ENCODE measurements at regions of chr6 and their contacts with region 1.

Region 1: DNA sequence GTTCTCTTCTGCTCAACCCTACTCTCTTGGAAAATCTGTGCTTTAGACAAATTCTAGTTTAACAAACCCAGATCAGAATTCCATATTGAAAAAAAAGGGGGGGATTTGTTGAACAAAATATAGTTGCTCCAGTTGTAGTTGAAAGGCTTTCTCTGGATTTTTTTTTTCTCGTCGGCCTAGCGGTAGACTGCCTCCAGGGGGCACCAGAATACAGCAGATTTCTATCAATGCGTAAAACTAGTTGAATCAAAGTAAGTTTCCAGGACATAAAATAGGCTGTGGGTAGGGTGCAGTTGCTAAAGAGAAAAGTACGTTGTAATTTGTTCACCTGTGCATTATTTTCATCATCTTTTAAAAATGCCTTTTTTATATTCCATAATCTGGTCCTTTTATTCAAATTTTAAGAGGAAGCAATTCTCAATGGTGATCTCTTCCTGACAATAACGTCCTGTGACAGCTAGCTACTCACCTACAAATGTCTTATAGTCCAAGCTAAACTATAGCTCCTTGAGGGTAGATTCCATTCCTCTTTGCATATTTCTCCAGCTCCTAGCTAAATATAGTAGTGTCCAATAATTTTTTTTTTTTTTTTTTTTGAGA is 105.4 kb downstream of the PERP start:
- DNase-seq: peak; percentile 74
- ATAC-seq: peak; percentile 60

Region 2: GRCh38 chr6:138115877-138116660 is 114.2 kb after region 1 on chr6:
- intact Hi-C with region 1: loop called (anchors 10 kb)
- DNase-seq: peak; percentile 64
- ATAC-seq: peak; percentile 89

Measured in sciatic nerve (tissue), 2 donors.